Esophagus squamous epithelium (tissue), 5 donors: ENCODE measurements at regions of chr2 and their contacts with region 1.

Region 1: GRCh38 chr2:126527836-126528507 is 128.0 kb upstream of the GYPC start:
- DNase-seq: no peak
- H3K4me3 ChIP-seq: no peak overlapping the region
- H3K27ac ChIP-seq: no peak overlapping the region
- H3K4me1 ChIP-seq: no peaks in the 10 kb centered on the region
- H3K27me3 ChIP-seq: no peaks in the 10 kb centered on the region
- CTCF ChIP-seq: peak in 5 of 6 experiments; percentile 39 to 61 (median 44)
- POLR2A ChIP-seq: no peak

Region 2: GRCh38 chr2:126776692-126777619 is 249.0 kb after region 1 on chr2:
- intact Hi-C with region 1: loop called (anchors 5 kb)
- DNase-seq: no peak
- H3K4me3 ChIP-seq: peak overlapping the region; percentile 30 to 75 (median 53)
- H3K27ac ChIP-seq: peak overlapping the region in 3 of 4 donors; percentile 21 to 55 (median 51)
- H3K4me1 ChIP-seq: peaks cover 0 to 15% (median 6%) of the 10 kb centered on the region in 3 donors
- H3K27me3 ChIP-seq: peaks cover 0 to 18% (median 0%) of the 10 kb centered on the region in 4 donors
- CTCF ChIP-seq: peak; percentile 74 to 91 (median 86)
- POLR2A ChIP-seq: no peak